Activated B cell treated with CpG ODN at 0.5 μM for 24 hours (primary cell): ENCODE measurements at regions of chr3 and their contacts with region 1.

Region 1: GRCh38 chr3:32992322-32992692 is 40.9 kb downstream of the CCR4 start:
- DNase-seq: no peak
- ATAC-seq: no peak
- H3K4me3 Mint-ChIP-seq: no peak overlapping the region
- H3K27ac Mint-ChIP-seq: no peak overlapping the region
- H3K4me1 Mint-ChIP-seq: peaks cover 13% of the 10 kb centered on the region
- H3K27me3 Mint-ChIP-seq: no peaks in the 10 kb centered on the region
- CTCF ChIP-seq: no peak

Region 2: GRCh38 chr3:32428092-32429068 is 563.9 kb before region 1 on chr3:
- CTCF ChIA-PET with region 1: no interaction called
- POLR2A ChIA-PET with region 1: no interaction called
- intact Hi-C with region 1: no loop called
- DNase-seq: no peak
- ATAC-seq: peak; percentile 42
- H3K4me3 Mint-ChIP-seq: peak overlapping the region; percentile 50
- H3K27ac Mint-ChIP-seq: peak overlapping the region; percentile 71
- H3K4me1 Mint-ChIP-seq: peaks cover 88% of the 10 kb centered on the region
- H3K27me3 Mint-ChIP-seq: no peaks in the 10 kb centered on the region
- CTCF ChIP-seq: no peak

Region 3: DNA sequence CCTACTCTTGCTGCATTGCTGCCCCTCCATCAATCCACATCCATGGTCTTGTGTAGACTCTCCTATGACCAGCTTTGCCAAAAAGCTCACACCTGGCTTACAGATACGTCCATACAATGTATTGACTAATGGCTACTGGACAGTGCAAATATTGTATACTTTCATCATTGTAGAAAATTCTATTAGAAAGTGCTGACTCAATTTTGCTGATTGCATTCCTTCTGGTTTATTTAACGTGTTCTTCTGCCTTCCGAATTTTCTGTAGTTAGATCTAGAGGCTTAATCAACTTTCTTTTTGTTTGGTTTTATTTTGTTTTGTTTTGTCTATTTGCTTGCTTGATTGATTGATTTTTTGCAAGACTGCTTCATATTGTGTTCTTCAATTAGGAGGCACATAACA is 337.1 kb before region 1 on chr3:
- CTCF ChIA-PET with region 1: no interaction called
- POLR2A ChIA-PET with region 1: no interaction called
- intact Hi-C with region 1: no loop called
- DNase-seq: no peak
- ATAC-seq: no peak
- H3K4me3 Mint-ChIP-seq: no peak overlapping the region
- H3K27ac Mint-ChIP-seq: no peak overlapping the region
- H3K4me1 Mint-ChIP-seq: no peaks in the 10 kb centered on the region
- H3K27me3 Mint-ChIP-seq: no peaks in the 10 kb centered on the region
- CTCF ChIP-seq: no peak

Region 4: GRCh38 chr3:32973982-32974381 is 18.3 kb before region 1 on chr3:
- CTCF ChIA-PET with region 1: no interaction called
- POLR2A ChIA-PET with region 1: no interaction called
- intact Hi-C with region 1: loop called (anchors 1 kb)
- DNase-seq: no peak
- ATAC-seq: no peak
- H3K4me3 Mint-ChIP-seq: no peak overlapping the region
- H3K27ac Mint-ChIP-seq: no peak overlapping the region
- H3K4me1 Mint-ChIP-seq: peaks cover 3% of the 10 kb centered on the region
- H3K27me3 Mint-ChIP-seq: no peaks in the 10 kb centered on the region
- CTCF ChIP-seq: no peak